Naive thymus-derived CD4-positive, alpha-beta T cell (primary cell): ENCODE measurements at regions of chr1 and their contacts with region 1.

Region 1: GRCh38 chr1:67853704-67854103 is 20.4 kb upstream of the GNG12 start:
- DNase-seq: no peak
- ATAC-seq: no peak
- H3K4me3 ChIP-seq: no peak overlapping the region
- H3K4me3 Mint-ChIP-seq: no peak overlapping the region
- H3K27ac ChIP-seq: no peak overlapping the region
- H3K27ac Mint-ChIP-seq: no peak overlapping the region
- H3K4me1 ChIP-seq: no peaks in the 10 kb centered on the region
- H3K4me1 Mint-ChIP-seq: no peaks in the 10 kb centered on the region
- H3K27me3 ChIP-seq: no peaks in the 10 kb centered on the region
- H3K27me3 Mint-ChIP-seq: peaks cover 18 to 29% (median 22%) of the 10 kb centered on the region in 5 donors

Region 2: DNA sequence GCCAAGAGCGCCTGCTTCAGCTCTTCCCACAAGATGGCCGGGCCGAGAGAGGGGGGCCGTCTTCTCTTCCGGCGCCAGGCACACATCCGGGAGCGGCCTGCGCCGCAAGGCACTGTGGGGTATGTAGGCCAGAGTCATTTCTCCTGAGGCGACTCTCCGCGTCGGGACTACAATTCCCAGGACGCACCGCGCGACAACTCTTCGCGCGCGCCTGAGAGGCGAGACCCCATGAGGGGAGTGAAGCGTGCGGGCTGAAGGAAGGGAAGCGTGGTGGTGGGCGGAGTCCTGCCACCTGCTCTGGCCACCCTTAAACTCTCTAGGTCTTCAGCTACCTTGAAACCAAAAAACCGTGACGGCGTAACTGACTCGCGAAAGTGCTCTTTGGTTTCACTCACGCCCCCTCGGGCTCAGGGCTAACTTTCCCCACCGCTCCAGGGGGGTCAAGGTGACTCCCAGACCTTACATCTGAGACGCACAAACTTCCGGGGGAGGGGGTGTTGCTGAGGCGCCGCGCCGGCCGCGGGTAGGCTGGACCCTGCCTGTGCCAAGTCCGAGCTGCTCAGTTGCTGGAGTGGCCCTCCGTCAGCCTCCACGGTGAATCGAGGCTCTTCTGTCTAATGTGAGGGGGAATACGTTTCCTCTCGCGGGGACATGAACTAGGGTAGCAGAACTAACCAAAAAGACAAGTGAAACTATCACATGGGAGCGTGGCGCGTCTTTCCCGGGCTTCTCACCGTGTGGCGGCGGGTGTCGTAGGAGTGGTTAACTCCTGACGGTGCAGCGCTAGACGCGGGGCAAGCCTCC is 423.1 kb before region 1 on chr1 and contains the start of gene SERBP1:
- CTCF ChIA-PET with region 1: no interaction called
- POLR2A ChIA-PET with region 1: no interaction called
- intact Hi-C with region 1: no loop called
- DNase-seq: peak; percentile 86 to 97 (median 94)
- ATAC-seq: peak; percentile 94
- H3K4me3 ChIP-seq: peak within 1 kb of the TSS; percentile 98
- H3K4me3 Mint-ChIP-seq: peak within 1 kb of the TSS; percentile 93 to 99 (median 95)
- H3K27ac ChIP-seq: peak within 1 kb of the TSS; percentile 96
- H3K27ac Mint-ChIP-seq: peak within 1 kb of the TSS; percentile 95 to 99 (median 96)
- H3K4me1 ChIP-seq: peaks cover 5 to 16% of the 10 kb centered on the region in 2 donors
- H3K4me1 Mint-ChIP-seq: peaks cover 28 to 64% (median 57%) of the 10 kb centered on the region in 7 donors
- H3K27me3 ChIP-seq: no peaks in the 10 kb centered on the region
- H3K27me3 Mint-ChIP-seq: no peaks in the 10 kb centered on the region
- total RNA-seq, gene SERBP1: 108 to 282 (median 151) TPM

Region 3: DNA sequence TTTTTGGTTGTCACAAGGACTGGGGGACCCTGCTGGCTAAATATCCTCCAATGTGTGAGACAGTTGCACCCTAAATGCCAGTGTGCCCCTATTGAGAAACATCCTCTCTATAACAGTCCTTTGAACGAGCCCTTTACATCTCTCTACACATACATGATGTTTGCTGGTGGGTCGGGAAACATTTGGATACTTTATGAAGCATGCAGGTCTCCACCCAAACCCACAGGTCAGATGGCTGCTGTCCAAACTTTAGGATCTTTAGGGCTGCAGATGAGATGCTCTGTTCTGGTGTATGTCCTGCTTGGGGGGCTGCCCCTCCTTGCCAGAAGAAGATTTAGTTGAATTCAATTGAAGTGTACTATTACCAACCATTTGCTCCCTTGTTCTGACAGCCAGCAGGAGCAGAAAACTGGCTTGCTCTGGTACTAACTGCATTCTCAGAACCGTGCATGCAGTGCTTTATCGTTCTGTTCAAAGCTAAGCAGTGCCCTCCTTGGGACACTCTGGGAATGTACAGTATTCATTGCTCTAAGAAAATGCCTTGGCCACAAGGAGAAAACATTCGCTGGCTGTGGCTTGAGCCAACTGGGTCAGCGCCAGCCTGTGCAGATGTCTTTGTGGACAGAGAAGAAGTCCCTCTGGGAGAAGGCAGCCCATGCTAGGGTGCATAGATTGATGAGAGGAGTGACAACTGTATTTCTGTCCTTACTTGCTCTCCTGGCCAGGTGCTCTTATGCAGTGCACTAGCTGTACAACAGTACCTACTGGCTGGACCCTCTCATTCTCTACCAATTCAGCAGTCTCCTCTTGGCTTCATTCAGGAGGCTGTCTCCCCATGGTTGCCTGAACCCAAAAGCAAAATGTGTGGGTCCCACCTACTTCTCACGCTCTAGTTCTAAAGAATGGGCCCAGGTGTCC is 258.1 kb after region 1 on chr1:
- CTCF ChIA-PET with region 1: no interaction called
- POLR2A ChIA-PET with region 1: no interaction called
- intact Hi-C with region 1: loop called in 1 of 2 experiments (anchors 5 kb)
- DNase-seq: no peak
- ATAC-seq: peak; percentile 31
- H3K4me3 ChIP-seq: no peak overlapping the region
- H3K4me3 Mint-ChIP-seq: no peak overlapping the region
- H3K27ac ChIP-seq: no peak overlapping the region
- H3K27ac Mint-ChIP-seq: no peak overlapping the region
- H3K4me1 ChIP-seq: no peaks in the 10 kb centered on the region
- H3K4me1 Mint-ChIP-seq: peaks cover 0 to 4% (median under 1%) of the 10 kb centered on the region in 7 donors
- H3K27me3 ChIP-seq: no peaks in the 10 kb centered on the region
- H3K27me3 Mint-ChIP-seq: peaks cover 8 to 18% (median 9%) of the 10 kb centered on the region in 5 donors